RWPE1 (cell line): ENCODE measurements at regions of chr11 and their contacts with region 1.

Region 1: DNA sequence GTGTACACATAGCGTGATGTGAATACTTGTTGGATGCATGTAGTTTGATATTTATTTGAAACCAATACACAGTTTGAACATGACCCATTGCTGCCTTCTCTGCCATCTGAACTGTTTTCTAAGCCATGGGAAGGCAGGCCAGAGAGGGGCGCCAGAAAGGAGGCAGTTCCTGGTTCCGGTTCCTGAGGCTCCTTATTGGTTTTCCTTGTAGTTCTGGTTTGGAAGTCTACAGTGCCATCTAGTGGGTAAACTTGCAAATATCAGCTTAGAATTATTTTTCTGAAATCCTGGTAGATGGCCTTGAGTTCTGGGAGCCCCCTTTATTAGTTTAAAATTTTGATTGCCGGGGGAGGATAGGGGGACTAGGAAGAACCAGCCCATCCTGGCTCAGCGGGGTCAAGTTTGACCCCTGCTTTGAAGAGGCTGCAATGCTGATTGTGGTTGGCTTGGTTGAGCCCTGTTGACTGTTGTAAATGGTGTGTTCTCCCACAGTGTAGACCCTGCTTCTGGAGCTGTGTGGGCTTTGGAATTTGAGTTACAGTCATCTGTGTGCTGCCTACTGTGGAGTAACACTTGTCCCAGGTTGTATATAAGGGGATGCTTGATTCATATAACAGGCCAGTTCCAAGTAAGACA is 48.4 kb downstream of the GRAMD1B start:
- DNase-seq: peak; percentile 69
- H3K27ac ChIP-seq: no peak overlapping the region
- CTCF ChIP-seq: peak; percentile 72

Region 2: DNA sequence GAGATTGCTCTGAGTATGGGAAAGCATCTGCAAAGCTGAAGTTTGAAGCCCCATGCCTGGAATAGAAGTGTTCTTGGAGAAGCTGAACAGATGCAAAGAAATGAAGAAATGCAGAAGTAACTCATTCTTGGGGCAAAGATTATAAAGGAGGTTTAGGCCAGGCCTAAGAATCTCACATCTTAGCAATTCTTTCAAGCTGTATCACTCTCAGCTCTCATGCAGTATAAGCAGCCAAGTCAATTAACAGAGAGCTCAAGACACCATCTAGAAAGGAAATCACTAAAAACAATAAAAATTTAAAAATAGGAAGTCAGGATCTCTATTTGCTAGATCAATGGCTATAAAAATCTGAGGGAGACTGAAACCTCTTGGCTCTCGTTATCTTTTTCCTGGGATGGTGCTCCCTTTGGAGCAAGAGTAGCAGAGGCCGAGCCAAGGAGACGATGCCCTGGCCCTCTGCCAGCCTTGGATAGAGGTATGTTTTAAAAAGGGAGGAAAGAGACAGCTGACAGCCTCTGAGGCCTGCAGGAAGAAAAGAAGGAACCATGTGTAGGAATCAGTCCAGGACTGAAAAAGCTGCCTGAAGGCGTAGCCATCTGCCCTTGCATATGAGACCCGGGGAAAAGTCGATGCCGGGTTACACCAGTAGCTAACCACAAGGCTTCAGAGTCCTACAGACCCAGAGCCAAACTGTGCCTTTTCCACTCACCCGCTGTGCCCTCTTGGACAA is 1592.3 kb before region 1 on chr11:
- CTCF ChIA-PET with region 1: no interaction called
- POLR2A ChIA-PET with region 1: no interaction called
- DNase-seq: no peak
- H3K27ac ChIP-seq: no peak overlapping the region
- CTCF ChIP-seq: no peak

Region 3: GRCh38 chr11:123407130-123407995 is 71.1 kb before region 1 on chr11:
- CTCF ChIA-PET with region 1: interaction called, 36 read pairs
- POLR2A ChIA-PET with region 1: no interaction called
- DNase-seq: peak; percentile 62
- H3K27ac ChIP-seq: no peak overlapping the region
- CTCF ChIP-seq: peak; percentile 68

Region 4: DNA sequence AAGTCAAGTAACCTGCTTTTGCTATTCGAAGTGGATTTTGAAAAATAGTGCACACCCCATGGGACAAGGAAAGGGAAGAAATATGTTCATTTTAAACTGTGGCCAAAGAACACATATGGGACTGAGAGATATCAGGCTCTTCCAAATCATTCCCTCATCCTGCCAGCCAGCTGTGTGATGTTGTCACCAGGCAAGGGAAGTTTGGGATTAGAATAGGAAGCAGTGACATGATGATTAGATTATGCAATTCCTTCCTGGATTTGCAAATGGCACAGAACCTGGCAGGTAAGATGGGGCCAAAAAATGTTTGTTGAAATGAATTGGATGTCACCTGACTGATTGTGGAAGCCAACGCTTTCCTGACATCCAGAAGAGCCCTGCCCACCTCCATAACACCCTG is 180.8 kb after region 1 on chr11:
- CTCF ChIA-PET with region 1: no interaction called
- POLR2A ChIA-PET with region 1: no interaction called
- DNase-seq: no peak
- H3K27ac ChIP-seq: no peak overlapping the region
- CTCF ChIP-seq: no peak